ENCODE measurements at regions of chr2 and their contacts with region 1.

Region 1: DNA sequence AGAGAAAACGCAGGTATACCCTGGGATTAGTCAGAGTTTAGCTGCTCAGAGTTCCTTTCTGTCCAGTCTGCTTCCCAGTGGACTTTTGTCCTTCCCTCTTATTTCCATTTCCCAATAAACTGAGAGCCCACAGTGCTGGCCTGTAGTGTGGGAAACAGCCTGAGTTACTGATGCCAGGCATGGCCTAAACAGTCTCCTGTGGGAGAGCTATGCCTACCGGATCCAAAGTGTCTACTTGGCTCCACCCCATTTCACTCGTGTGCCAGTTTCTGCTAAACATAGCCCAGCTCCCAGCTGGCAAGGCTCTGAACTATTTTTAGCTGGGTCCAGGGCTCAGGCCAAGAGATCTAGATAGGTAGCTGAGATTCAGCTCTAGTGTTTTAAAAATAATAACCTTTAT is 15.6 kb upstream of the PPP1CB start:
- DNase-seq: peak in 1 of 2 experiments; percentile 34
- H3K4me3 ChIP-seq: no peak overlapping the region
- H3K27ac ChIP-seq: no peak overlapping the region
- H3K4me1 ChIP-seq: peaks cover 8% of the 10 kb centered on the region
- H3K27me3 ChIP-seq: no peaks in the 10 kb centered on the region
- CTCF ChIP-seq: no peak

Region 2: DNA sequence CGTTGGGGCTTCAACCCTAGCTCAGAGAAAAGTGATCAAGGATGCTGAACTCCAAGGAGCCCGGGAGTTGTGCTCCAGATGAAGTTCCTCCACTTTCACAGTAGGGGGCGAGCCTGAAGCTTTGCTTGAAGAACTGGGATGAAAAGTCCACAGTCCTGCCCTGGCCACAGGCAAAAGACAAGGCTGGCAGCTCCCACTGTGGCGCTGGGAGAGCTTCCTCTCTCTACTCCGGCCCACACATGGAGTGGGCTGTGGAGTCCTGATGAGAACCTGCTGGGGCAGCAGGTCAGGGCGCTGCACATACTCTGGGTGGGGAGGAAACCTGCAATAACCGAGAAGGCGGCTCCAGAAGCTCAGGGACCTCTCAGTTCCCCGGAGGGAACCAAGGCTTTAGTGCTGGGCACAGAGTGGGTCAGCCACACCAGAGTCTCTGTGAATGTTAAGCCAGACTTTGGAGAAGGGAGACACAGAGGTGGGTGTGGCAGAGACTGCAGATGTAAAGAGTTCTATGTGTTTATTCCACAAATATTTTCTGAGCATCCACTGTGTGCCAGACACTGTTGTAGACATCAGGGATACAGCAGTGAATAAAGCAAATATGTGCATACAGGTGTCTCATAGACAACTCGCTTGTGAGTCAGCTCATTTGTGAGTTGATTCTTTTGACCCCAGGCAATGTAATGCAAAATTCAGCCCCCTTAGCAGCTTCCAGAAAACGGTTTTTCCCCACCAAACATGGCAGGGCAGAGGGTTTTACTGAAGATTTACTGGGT is 1012.5 kb before region 1 on chr2:
- CTCF ChIA-PET with region 1: no interaction called
- POLR2A ChIA-PET with region 1: interaction called, 23 read pairs
- intact Hi-C with region 1: no loop called
- DNase-seq: peak; percentile 52 to 55
- H3K4me3 ChIP-seq: no peak overlapping the region
- H3K27ac ChIP-seq: peak overlapping the region; percentile 92
- H3K4me1 ChIP-seq: peaks cover 64% of the 10 kb centered on the region
- H3K27me3 ChIP-seq: no peaks in the 10 kb centered on the region
- CTCF ChIP-seq: peak; percentile 91